ENCODE measurements at regions of chr1 and their contacts with region 1.

Region 1: DNA sequence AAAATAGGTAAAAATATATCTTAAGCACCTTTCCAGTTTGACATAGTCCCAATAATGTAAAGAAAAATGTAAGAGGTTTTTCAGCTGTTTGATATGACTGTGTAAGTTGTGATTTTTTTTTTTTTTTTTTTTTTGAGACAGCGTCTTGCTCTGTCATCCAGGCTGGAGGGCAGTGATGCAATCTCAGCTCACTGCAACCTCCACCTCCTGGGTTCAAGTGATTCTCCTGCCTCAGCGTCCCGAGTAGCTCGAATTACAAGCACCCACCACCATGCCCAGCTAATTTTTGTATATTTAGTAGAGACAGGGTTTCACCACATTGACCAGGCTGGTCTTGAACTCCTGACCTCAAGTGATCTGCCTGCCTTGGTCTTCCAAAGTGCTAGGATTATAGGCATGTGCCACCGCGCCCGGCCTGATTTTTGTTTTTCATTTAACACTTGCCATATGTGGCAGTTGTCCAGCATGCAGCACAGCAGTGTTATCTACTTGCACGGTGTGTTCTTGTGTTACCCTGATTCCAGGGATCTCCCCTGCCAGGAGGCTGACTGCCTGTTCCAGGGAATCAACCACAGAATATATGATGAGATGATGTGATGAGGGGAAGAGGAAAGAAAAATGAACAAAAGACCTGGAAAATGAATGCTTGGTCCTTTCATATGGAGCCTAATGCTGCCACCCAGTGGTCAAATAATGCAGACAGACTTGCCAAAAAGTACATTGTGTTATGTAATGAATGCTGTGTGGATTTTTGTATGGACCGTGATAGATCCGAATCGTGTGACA is 79.0 kb downstream of the RAVER2 start:
- DNase-seq: peak; percentile 88
- H3K4me3 Mint-ChIP-seq: no peak overlapping the region
- H3K27ac Mint-ChIP-seq: peak overlapping the region; percentile 66
- H3K4me1 Mint-ChIP-seq: peaks cover 18% of the 10 kb centered on the region
- H3K27me3 Mint-ChIP-seq: no peaks in the 10 kb centered on the region
- CTCF ChIP-seq: peak; percentile 64

Region 2: GRCh38 chr1:64242895-64243756 is 580.8 kb before region 1 on chr1:
- CTCF ChIA-PET with region 1: no interaction called
- POLR2A ChIA-PET with region 1: no interaction called
- intact Hi-C with region 1: no loop called
- DNase-seq: peak; percentile 57
- H3K4me3 Mint-ChIP-seq: no peak overlapping the region
- H3K27ac Mint-ChIP-seq: no peak overlapping the region
- H3K4me1 Mint-ChIP-seq: no peaks in the 10 kb centered on the region
- H3K27me3 Mint-ChIP-seq: no peaks in the 10 kb centered on the region
- CTCF ChIP-seq: peak; percentile 38

Region 3: DNA sequence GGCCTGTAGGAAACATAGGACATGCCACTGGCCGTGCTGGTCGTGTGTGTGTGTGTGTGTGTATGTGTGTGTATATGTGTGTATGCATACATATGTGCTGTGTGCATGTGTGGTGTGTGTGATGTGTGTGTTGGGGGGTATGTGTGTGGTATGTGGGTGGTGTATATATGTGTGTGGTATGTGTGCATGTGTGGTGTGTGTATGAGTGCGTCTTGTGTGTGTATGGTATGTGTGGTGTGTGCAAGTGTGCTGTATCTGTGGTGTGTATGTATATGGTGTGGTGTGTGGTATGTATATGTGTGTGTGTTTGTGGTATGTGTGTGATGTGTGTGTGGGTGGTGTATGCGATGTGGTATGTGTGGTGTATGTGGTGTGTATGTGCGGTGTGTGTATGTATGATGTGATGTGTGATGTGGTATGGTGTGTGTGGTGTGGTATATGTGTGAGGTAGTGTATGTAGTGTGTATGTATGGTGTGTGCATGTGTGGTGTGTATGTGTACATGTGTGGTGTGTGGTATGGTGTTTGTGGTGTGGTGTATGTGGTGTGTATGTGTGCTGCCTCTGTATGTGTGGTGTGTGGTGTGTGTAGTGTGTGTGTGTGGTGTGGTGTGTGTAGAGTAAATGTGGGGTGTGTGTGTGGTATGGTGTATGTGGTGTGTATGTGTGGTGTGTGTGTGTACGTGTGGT is 474.8 kb before region 1 on chr1:
- CTCF ChIA-PET with region 1: no interaction called
- POLR2A ChIA-PET with region 1: no interaction called
- intact Hi-C with region 1: loop called (anchors 5 kb)
- DNase-seq: no peak
- H3K4me3 Mint-ChIP-seq: no peak overlapping the region
- H3K27ac Mint-ChIP-seq: no peak overlapping the region
- H3K4me1 Mint-ChIP-seq: peaks cover 14% of the 10 kb centered on the region
- H3K27me3 Mint-ChIP-seq: peaks cover 3% of the 10 kb centered on the region
- CTCF ChIP-seq: no peak

Region 4: DNA sequence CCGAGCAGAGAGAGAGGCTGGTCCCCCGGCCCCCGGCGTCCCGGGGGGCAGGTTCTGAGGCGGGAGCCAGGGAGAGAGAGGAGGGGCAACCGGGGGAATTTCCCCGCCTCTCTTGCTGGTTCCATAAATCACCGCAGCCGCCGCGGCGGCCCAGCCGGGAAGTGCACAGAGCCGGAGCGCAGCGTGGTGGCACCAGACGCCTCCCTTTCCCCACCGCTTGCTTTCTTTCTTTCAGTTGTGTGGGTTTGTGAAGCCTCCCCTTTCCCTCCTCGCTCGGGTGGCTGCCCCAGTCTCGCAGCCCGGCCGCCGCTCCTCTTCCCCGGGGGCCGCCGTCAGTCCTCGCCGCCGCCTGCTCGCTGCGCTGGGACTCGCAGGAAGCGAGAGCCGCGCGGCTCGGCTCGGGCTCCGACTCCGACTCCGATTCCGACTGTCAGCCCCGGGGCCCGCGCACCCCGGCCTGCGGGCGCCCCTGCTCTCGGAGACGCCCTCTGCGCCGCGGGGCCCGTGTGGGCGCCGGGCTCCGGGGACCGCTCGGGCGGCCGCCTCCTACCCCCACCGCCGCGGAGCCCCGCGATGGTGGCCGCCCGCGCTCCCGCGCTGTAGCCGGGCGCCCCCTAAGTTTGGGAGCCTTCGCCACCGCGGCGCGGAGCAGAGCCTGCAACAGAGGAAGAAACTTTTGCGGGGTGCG is 353.8 kb before region 1 on chr1 and contains the start of gene CACHD1:
- CTCF ChIA-PET with region 1: interaction called, 3 read pairs
- POLR2A ChIA-PET with region 1: no interaction called
- intact Hi-C with region 1: loop called (anchors 2 kb)
- DNase-seq: peak; percentile 76
- H3K4me3 Mint-ChIP-seq: peak within 1 kb of the TSS; percentile 83
- H3K27ac Mint-ChIP-seq: peak within 1 kb of the TSS; percentile 37
- H3K4me1 Mint-ChIP-seq: peaks cover 28% of the 10 kb centered on the region
- H3K27me3 Mint-ChIP-seq: peaks cover 8% of the 10 kb centered on the region
- CTCF ChIP-seq: peak; percentile 24
- total RNA-seq, gene CACHD1: 2.9 and 3.9 TPM in 2 replicates

Region 5: GRCh38 chr1:64686828-64687724 is 136.8 kb before region 1 on chr1:
- CTCF ChIA-PET with region 1: interaction called, 36 read pairs
- POLR2A ChIA-PET with region 1: interaction called, 3 read pairs
- intact Hi-C with region 1: loop called (anchors 1 kb)
- DNase-seq: peak; percentile 71
- H3K4me3 Mint-ChIP-seq: no peak overlapping the region
- H3K27ac Mint-ChIP-seq: no peak overlapping the region
- H3K4me1 Mint-ChIP-seq: peaks cover 19% of the 10 kb centered on the region
- H3K27me3 Mint-ChIP-seq: no peaks in the 10 kb centered on the region
- CTCF ChIP-seq: peak; percentile 57

Region 6: DNA sequence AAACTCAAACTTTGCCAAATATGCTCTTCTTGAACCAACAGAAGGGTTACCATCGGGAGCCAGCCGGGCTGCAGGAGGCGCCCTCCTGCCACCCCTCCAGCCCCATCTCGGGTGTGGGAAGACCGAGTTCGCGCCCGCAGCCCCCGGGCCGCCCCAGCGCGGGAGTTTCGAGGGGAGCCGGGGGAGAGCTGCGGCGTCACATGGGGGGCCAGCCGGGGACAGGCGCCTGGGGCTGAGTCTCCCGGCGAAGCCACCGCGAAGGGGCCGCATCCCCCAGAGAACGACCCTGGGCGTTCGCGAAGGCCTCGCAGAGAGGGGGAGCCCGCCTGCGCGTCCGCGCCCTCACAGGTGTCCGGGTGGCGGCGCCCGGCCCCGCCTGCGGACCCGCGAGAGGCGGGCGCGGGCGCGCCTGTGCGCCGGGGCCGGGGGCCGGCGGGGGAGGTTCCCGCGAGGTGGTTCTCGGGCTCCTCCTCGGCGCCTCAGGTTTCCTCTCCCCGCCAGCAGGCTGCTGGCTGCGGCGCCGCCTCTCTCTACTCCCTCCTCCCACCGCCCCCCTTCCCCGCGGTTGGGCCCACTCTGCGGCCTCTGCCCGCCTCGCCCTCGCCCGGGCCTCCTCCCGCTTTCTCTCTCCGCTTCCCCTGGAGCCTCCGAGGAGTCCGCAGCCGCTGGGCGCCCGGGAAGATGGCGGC is 79.2 kb before region 1 on chr1 and contains the start of gene RAVER2:
- CTCF ChIA-PET with region 1: interaction called, 13 read pairs
- POLR2A ChIA-PET with region 1: interaction called, 10 read pairs
- intact Hi-C with region 1: loop called (anchors 1 kb)
- DNase-seq: peak; percentile 79
- H3K4me3 Mint-ChIP-seq: peak within 1 kb of the TSS; percentile 80
- H3K27ac Mint-ChIP-seq: peak within 1 kb of the TSS; percentile 31
- H3K4me1 Mint-ChIP-seq: peaks cover 21% of the 10 kb centered on the region
- H3K27me3 Mint-ChIP-seq: no peaks in the 10 kb centered on the region
- CTCF ChIP-seq: peak; percentile 53
- total RNA-seq, gene RAVER2: 5.3 and 5.9 TPM in 2 replicates

Measured in MCF 10A (cell line).